Activated B cell treated with CpG ODN at 0.5 μM for 24 hours (primary cell): ENCODE measurements at regions of chr10 and their contacts with region 1.

Region 1: DNA sequence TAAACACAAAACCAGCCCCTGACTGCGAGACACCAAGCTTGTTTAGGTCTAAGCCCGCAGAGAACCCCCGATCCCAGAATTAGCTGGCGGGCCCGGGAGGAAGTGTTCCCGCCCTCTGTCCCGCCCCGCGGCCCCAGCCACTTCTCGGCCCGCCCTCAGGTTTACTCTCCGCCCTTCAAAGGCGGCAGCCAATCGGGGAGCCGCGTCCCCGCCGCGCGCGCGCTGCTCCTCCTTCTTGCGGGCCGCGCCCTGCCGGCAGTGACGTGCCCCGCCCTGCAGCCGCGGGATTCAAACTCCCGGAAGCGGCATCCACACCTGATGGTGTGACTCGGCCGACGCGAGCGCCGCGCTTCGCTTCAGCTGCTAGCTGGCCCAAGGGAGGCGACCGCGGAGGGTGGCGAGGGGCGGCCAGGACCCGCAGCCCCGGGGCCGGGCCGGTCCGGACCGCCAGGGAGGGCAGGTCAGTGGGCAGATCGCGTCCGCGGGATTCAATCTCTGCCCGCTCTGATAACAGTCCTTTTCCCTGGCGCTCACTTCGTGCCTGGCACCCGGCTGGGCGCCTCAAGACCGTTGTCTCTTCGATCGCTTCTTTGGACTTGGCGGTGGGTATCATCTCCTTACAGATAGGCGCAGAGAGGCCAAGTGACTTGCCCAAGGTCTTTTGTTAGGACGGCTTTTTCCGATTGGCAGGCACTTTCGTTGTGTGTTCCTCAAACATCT is at the start of gene CEP55:
- DNase-seq: peak; percentile 94
- ATAC-seq: peak; percentile 100
- H3K4me3 Mint-ChIP-seq: peak within 1 kb of the TSS; percentile 92
- H3K27ac Mint-ChIP-seq: peak within 1 kb of the TSS; percentile 74
- H3K4me1 Mint-ChIP-seq: peaks cover 16% of the 10 kb centered on the region
- H3K27me3 Mint-ChIP-seq: no peaks in the 10 kb centered on the region
- CTCF ChIP-seq: no peak
- total RNA-seq, gene CEP55: 0.95 and 1.6 TPM in 2 replicates

Region 2: GRCh38 chr10:93458821-93459257 is 37.6 kb before region 1 on chr10:
- CTCF ChIA-PET with region 1: no interaction called
- POLR2A ChIA-PET with region 1: no interaction called
- intact Hi-C with region 1: no loop called
- DNase-seq: no peak
- ATAC-seq: no peak
- H3K4me3 Mint-ChIP-seq: no peak overlapping the region
- H3K27ac Mint-ChIP-seq: no peak overlapping the region
- H3K4me1 Mint-ChIP-seq: peaks cover 15% of the 10 kb centered on the region
- H3K27me3 Mint-ChIP-seq: peaks cover 2% of the 10 kb centered on the region
- CTCF ChIP-seq: no peak

Region 3: GRCh38 chr10:94279835-94280709 is 783.6 kb after region 1 on chr10:
- CTCF ChIA-PET with region 1: no interaction called
- POLR2A ChIA-PET with region 1: no interaction called
- intact Hi-C with region 1: no loop called
- DNase-seq: peak; percentile 49
- ATAC-seq: peak; percentile 57
- H3K4me3 Mint-ChIP-seq: no peak overlapping the region
- H3K27ac Mint-ChIP-seq: no peak overlapping the region
- H3K4me1 Mint-ChIP-seq: peaks cover 5% of the 10 kb centered on the region
- H3K27me3 Mint-ChIP-seq: peaks cover 14% of the 10 kb centered on the region
- CTCF ChIP-seq: peak; percentile 76

Region 4: GRCh38 chr10:94545391-94546048 is 1049.0 kb after region 1 on chr10 and contains the start of gene HELLS:
- CTCF ChIA-PET with region 1: no interaction called
- POLR2A ChIA-PET with region 1: no interaction called
- intact Hi-C with region 1: loop called (anchors 10 kb)
- DNase-seq: peak; percentile 60
- ATAC-seq: peak; percentile 81
- H3K4me3 Mint-ChIP-seq: peak within 1 kb of the TSS; percentile 99
- H3K27ac Mint-ChIP-seq: peak within 1 kb of the TSS; percentile 87
- H3K4me1 Mint-ChIP-seq: peaks cover 23% of the 10 kb centered on the region
- H3K27me3 Mint-ChIP-seq: peaks cover 2% of the 10 kb centered on the region
- CTCF ChIP-seq: no peak
- total RNA-seq, gene HELLS: 23.8 and 27.3 TPM in 2 replicates